Motor neuron (in vitro differentiated cells): ENCODE measurements at regions of chr20 and their contacts with region 1.

Region 1: GRCh38 chr20:44609511-44610312 is 27.3 kb downstream of the PKIG start:
- ATAC-seq: peak; percentile 94 to 99 (median 98)
- H3K4me3 ChIP-seq: peak overlapping the region in 1 of 5 donors; percentile 6
- H3K27ac ChIP-seq: peak overlapping the region in 1 of 2 donors; percentile 35
- H3K4me1 ChIP-seq: peaks cover 5 to 10% of the 10 kb centered on the region in 2 donors

Region 2: GRCh38 chr20:44388466-44389023 is 221.2 kb before region 1 on chr20:
- in situ Hi-C with region 1: loop called in 1 of 9 experiments (anchors 25 kb)
- ATAC-seq: peak in 6 of 8 experiments; percentile 32 to 95 (median 76)
- H3K4me3 ChIP-seq: no peak overlapping the region
- H3K27ac ChIP-seq: no peak overlapping the region
- H3K4me1 ChIP-seq: no peaks in the 10 kb centered on the region

Region 3: GRCh38 chr20:44475694-44476560 is 133.8 kb before region 1 on chr20 and contains the start of gene TTPAL:
- in situ Hi-C with region 1: loop called in 2 of 9 experiments (anchors 25 kb)
- ATAC-seq: peak; percentile 97 to 99 (median 98)
- H3K4me3 ChIP-seq: peak within 1 kb of the TSS; percentile 63 to 98 (median 94)
- H3K27ac ChIP-seq: peak within 1 kb of the TSS; percentile 96 to 97
- H3K4me1 ChIP-seq: peaks cover 6 to 7% of the 10 kb centered on the region in 2 donors
- total RNA-seq, gene TTPAL: 7.1 to 18.9 (median 11.9) TPM

Region 4: DNA sequence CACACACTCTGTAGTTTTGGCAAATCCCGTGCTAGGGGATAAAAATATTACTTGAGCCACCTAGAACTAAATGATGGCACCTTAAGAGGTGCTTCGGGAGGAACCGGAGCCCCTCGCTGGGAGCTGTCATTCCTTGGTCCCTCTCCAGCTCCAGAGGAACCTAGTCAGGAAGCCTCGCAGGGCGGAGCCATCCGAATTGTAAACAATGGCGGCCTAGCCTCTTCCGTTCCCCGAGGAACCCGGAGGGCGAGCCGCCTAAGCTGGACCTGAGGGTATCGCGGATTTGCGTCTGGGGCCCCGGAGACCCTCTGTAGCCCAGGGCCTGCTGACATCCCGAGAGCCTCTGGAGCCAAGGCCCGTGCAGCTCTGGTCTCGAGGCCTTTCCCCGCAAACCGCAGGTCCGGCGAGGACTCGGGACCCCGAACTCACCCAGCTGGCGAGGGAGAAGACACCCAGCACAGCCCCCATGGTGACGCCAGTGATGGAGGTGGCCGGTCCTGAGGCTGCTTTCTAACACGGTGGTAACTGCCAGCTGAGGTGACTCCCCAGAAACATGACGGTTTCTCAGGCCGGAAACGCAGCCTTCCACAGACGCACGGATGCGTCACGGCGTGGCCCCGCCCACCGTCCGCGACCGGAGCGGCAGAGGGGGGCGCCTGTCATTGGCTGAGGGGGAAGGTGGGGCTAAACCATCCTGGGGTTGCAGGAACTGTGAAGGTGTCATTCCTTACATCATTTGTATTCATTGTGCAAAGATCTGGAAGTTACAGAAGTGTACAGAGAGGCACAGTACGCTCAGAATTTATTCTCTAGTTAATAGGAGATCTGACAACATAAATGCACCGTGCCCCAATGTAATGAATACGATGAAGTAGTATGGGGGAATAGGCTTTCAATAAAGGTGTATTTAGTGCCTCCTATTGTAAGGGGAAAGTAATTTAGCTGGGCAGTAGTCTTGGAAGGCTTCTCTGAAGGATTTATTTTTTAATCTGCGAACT is 87.9 kb before region 1 on chr20 and contains the start of gene SERINC3:
- in situ Hi-C with region 1: loop called in 1 of 9 experiments (anchors 25 kb)
- ATAC-seq: peak; percentile 94 to 100 (median 98)
- H3K4me3 ChIP-seq: peak within 1 kb of the TSS; percentile 83 to 98 (median 90)
- H3K27ac ChIP-seq: peak within 1 kb of the TSS; percentile 93 to 95
- H3K4me1 ChIP-seq: peaks cover 12 to 17% of the 10 kb centered on the region in 2 donors
- total RNA-seq, gene SERINC3: 39.3 to 108 (median 61.1) TPM